ENCODE measurements at regions of chr1 and their contacts with region 1.

Region 1: GRCh38 chr1:28886731-28887418 is 27.5 kb upstream of the EPB41 start:
- DNase-seq: peak; percentile 98
- H3K4me3 Mint-ChIP-seq: peak overlapping the region; percentile 89
- H3K27ac Mint-ChIP-seq: peak overlapping the region; percentile 92
- H3K4me1 Mint-ChIP-seq: peaks cover 50% of the 10 kb centered on the region
- H3K27me3 Mint-ChIP-seq: no peaks in the 10 kb centered on the region

Region 2: GRCh38 chr1:28926629-28927265 is 39.9 kb after region 1 on chr1:
- intact Hi-C with region 1: loop called (anchors 5 kb)
- DNase-seq: peak; percentile 89
- H3K4me3 Mint-ChIP-seq: peak overlapping the region; percentile 73
- H3K27ac Mint-ChIP-seq: peak overlapping the region; percentile 89
- H3K4me1 Mint-ChIP-seq: peaks cover 41% of the 10 kb centered on the region
- H3K27me3 Mint-ChIP-seq: no peaks in the 10 kb centered on the region

Region 3: GRCh38 chr1:29033829-29034466 is 147.1 kb after region 1 on chr1:
- intact Hi-C with region 1: loop called (anchors 1 kb)
- DNase-seq: peak; percentile 60
- H3K4me3 Mint-ChIP-seq: no peak overlapping the region
- H3K27ac Mint-ChIP-seq: no peak overlapping the region
- H3K4me1 Mint-ChIP-seq: no peaks in the 10 kb centered on the region
- H3K27me3 Mint-ChIP-seq: no peaks in the 10 kb centered on the region

Region 4: GRCh38 chr1:29181413-29182225 is 294.7 kb after region 1 on chr1 and contains the start of gene SRSF4:
- intact Hi-C with region 1: loop called (anchors 1 kb)
- DNase-seq: peak; percentile 100
- H3K4me3 Mint-ChIP-seq: peak within 1 kb of the TSS; percentile 96
- H3K27ac Mint-ChIP-seq: peak within 1 kb of the TSS; percentile 97
- H3K4me1 Mint-ChIP-seq: peaks cover 44% of the 10 kb centered on the region
- H3K27me3 Mint-ChIP-seq: no peaks in the 10 kb centered on the region
- total RNA-seq, gene SRSF4: 138 and 141 TPM in 2 replicates

Measured in activated CD4-positive, alpha-beta T cell treated with anti-CD3 and anti-CD28 coated beads, Interleukin-2, amount 10 ng/mL, durations not matched to agents 24 days and 14 days (primary cell).